Activated T-helper 2 cell treated with anti-CD3 and anti-CD28 coated beads, Interferon-gamma antibody, Interleukin-2, Interleukin-4, amounts not matched to agents 10 μg/mL and 5 μg/mL and 100 μg/mL, durations not matched to agents 14 hours and 24 hours and 36 hours (primary cell): ENCODE measurements at regions of chr7 and their contacts with region 1.

Region 1: GRCh38 chr7:39589323-39590111 is 23.3 kb downstream of the YAE1 start:
- DNase-seq: peak; percentile 65
- H3K4me3 Mint-ChIP-seq: no peak overlapping the region
- H3K27ac Mint-ChIP-seq: peak overlapping the region; percentile 61
- H3K4me1 Mint-ChIP-seq: peaks cover 42% of the 10 kb centered on the region
- H3K27me3 Mint-ChIP-seq: peaks cover 2% of the 10 kb centered on the region

Region 2: DNA sequence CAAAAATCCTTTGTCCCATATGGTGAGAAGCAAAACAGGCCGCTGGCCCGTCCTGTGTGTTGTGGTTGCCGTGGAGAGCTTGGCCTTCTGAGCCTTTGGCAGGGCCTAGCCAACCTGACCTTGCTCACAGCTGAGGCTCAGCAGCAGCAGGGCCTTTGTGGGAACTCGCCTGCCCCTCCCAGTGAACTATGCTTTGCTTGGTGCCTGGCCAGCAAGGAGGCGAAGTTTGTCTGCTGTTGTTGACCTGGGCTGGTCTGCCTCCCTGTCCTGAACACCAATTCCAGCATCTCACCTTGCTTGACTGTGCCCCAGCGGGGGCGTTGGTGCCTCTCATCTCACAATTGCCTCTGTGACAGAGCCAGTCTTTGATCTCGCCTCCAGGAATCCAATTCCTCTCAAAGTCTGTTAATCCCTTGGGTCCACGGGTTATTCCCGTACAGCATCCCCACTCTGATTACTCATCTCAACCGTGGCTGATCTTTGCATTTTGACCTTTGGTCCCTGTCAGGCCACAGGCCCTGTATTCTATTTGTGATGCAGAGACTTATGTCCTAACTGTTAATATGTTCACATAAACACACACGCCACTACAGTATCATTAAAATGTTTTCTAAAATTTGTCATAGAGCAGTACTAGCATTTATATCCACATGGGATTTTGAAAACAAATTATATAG is 1646.4 kb before region 1 on chr7:
- intact Hi-C with region 1: no loop called
- DNase-seq: no peak
- H3K4me3 Mint-ChIP-seq: no peak overlapping the region
- H3K27ac Mint-ChIP-seq: no peak overlapping the region
- H3K4me1 Mint-ChIP-seq: no peaks in the 10 kb centered on the region
- H3K27me3 Mint-ChIP-seq: peaks cover 3% of the 10 kb centered on the region

Region 3: DNA sequence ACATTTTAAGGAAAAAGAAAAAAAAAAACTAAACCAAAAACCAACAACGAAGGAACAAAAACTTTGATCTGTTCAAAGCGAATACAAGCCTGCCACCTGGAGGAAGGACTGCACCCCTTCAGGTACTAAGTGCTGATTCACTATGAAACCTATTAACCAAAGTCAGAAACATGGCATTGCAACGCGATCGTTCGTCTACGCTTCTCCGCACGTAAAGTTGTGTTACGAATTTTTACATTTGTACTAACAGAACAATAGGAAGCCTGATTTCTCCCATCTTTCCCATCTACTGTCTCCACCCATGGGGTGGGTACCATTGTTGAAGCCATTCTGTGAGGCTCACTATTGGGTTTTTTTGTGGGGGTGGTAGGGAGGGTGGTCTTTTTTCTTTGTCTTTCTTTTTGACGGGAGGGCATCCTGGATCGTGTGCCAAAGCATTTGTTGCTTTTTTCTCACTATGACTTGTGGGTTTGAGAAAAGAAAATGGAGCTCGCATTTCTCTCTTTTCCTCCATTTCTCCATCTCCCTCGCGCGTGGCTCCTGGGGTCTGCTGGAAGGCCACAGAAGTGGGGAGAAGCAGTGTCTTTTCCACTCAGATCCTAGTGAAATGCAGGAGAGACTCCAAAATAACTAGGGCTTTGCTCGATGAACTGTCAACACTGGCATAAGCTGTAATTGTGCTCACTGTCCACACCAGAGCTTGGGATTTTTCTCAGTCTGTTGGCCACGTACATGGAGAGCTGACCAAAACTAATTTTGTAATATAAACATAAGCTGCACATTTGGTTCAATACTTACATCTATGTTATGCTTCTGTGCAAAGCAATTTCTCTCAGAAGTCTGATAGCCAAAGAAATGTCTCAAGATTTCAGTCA is 124.2 kb before region 1 on chr7:
- intact Hi-C with region 1: no loop called
- DNase-seq: peak; percentile 14
- H3K4me3 Mint-ChIP-seq: no peak overlapping the region
- H3K27ac Mint-ChIP-seq: no peak overlapping the region
- H3K4me1 Mint-ChIP-seq: peaks cover 7% of the 10 kb centered on the region
- H3K27me3 Mint-ChIP-seq: peaks cover 25% of the 10 kb centered on the region

Region 4: DNA sequence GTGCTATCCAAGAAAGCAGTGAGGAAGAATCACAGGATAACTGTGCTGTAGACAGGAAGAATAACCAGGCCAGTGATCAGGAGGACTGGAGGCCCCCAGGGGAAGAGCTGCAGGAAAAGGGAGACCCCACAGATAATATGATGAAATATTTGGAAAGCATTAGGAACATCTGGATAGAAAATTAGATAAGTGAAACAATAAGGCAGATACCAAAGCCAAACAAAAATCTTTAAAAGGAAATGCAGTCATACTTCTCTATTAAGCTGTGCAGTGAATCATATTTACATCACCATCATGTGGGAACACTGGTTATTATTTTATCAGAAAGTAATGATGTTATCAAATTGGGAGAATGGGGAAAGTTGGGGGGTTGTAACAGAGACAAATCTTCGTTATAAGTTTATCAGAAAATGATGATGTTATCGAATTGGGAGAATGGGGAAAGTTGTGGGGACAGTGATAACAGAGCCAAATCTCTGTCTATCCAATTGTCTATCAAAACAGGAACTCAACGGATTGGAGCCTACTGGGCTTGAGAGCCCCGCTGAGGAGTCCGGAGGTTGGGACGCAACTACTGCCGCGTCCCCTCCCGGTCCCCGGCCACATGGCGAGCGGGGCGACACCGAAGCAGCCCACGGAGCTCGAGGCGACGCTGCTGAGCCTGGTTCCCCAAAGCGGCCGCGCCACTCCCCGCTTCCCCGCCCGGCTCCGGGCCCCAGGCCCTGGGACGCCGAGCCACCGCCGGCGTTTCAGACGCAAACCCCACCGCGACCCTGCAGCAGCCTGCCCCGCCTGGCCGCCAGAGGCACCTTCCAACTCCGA is 19.8 kb after region 1 on chr7:
- intact Hi-C with region 1: loop called (anchors 1 kb)
- DNase-seq: no peak
- H3K4me3 Mint-ChIP-seq: no peak overlapping the region
- H3K27ac Mint-ChIP-seq: no peak overlapping the region
- H3K4me1 Mint-ChIP-seq: peaks cover 29% of the 10 kb centered on the region
- H3K27me3 Mint-ChIP-seq: peaks cover 24% of the 10 kb centered on the region

Region 5: DNA sequence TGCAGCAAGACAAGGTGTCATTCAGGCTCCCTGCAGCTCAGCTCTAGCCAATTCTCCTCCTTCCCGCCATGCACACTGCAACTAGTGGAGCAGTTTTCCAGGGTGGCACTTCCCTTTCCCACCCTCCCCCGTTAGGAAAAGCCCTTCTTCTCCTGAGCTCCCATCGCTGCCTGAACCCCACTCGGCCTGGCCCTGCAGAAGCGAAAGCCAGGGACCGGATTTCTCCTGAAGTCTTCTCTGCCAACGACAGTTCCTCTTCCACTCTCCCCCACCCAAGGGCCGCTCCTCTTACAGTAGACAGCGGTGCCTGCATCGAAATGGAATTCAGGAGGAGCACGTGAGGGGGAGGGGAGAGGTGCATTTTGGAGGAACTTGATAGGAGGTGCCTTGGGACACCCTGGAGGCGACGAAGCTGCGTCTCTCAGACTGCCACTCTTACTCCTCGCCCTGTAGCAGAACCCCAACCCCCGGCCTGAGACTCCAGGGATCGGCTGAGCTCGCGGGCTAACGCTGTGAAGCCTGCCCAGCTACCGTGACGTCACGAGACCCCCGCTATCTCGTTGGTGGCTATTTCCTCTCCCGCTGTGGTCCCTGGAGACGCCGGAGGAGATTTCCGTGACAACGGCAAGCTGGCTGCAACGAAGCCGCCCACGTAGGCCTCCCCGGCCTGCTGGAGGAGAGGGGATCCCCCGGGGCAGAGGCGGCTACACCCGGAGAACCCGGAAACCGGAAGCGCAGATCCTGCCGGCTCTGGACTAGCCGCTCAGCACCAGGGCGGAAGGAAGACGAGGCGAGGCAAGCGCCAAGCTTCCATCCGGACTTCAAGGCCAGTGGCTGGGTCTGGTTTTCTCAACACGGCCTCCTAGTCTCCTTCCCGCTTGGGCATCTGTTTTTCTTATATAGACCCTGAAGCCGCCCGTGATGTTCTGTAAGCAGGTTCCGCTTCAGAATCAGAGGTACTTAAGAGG is 143.6 kb after region 1 on chr7:
- intact Hi-C with region 1: loop called (anchors 1 kb)
- DNase-seq: peak; percentile 95
- H3K4me3 Mint-ChIP-seq: peak overlapping the region; percentile 85
- H3K27ac Mint-ChIP-seq: peak overlapping the region; percentile 81
- H3K4me1 Mint-ChIP-seq: peaks cover 33% of the 10 kb centered on the region
- H3K27me3 Mint-ChIP-seq: peaks cover 4% of the 10 kb centered on the region